ENCODE measurements at regions of chr6 and their contacts with region 1.

Region 1: GRCh38 chr6:44257025-44257752 is at the start of gene SLC35B2:
- DNase-seq: peak; percentile 47
- H3K4me3 Mint-ChIP-seq: peak within 1 kb of the TSS; percentile 84
- H3K27ac Mint-ChIP-seq: peak within 1 kb of the TSS; percentile 57
- H3K4me1 Mint-ChIP-seq: peaks cover 50% of the 10 kb centered on the region
- H3K27me3 Mint-ChIP-seq: no peaks in the 10 kb centered on the region
- CTCF ChIP-seq: peak; percentile 78
- total RNA-seq, gene SLC35B2: 27.1 and 31.3 TPM in 2 replicates

Region 2: DNA sequence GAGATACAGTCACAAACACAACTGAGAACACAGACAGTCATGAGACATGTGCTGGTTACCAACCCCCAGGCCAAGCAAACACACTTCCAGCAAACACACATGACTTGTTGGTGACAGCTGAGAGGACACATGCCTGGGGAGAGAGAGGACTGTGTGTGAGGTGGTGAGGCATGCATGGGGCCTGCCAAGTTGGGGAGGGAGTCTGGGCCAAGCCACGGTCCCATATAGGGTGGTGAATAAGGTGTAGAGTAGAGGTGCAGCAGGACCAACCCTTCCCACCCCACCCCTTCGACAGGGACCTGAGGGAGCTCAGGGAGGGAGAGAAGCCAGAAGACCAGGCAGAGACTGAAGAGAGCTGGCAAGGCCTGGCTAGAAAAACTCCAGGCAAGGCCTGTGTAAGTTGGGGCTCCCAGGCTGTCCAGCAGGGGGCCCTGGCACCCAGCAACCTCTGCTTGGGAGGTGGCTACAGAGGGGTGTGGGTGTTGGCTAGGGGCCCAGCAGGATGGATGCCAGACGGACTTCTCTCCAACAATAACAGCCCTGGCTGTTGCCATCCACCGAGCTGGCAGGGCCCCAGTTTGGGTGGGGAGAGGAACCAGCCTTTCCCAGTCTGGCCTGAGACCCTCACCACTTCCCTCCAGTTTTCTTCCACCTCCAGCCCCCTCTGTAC is 35.8 kb before region 1 on chr6:
- CTCF ChIA-PET with region 1: interaction called, 26 read pairs
- POLR2A ChIA-PET with region 1: interaction called, 6 read pairs
- intact Hi-C with region 1: loop called (anchors 1 kb)
- DNase-seq: peak; percentile 96
- H3K4me3 Mint-ChIP-seq: peak overlapping the region; percentile 47
- H3K27ac Mint-ChIP-seq: peak overlapping the region; percentile 89
- H3K4me1 Mint-ChIP-seq: peaks cover 37% of the 10 kb centered on the region
- H3K27me3 Mint-ChIP-seq: no peaks in the 10 kb centered on the region
- CTCF ChIP-seq: peak; percentile 76

Region 3: GRCh38 chr6:44275749-44276648 is 18.8 kb after region 1 on chr6:
- CTCF ChIA-PET with region 1: no interaction called
- POLR2A ChIA-PET with region 1: no interaction called
- intact Hi-C with region 1: no loop called
- DNase-seq: no peak
- H3K4me3 Mint-ChIP-seq: no peak overlapping the region
- H3K27ac Mint-ChIP-seq: no peak overlapping the region
- H3K4me1 Mint-ChIP-seq: no peaks in the 10 kb centered on the region
- H3K27me3 Mint-ChIP-seq: peaks cover 51% of the 10 kb centered on the region
- CTCF ChIP-seq: no peak

Region 4: DNA sequence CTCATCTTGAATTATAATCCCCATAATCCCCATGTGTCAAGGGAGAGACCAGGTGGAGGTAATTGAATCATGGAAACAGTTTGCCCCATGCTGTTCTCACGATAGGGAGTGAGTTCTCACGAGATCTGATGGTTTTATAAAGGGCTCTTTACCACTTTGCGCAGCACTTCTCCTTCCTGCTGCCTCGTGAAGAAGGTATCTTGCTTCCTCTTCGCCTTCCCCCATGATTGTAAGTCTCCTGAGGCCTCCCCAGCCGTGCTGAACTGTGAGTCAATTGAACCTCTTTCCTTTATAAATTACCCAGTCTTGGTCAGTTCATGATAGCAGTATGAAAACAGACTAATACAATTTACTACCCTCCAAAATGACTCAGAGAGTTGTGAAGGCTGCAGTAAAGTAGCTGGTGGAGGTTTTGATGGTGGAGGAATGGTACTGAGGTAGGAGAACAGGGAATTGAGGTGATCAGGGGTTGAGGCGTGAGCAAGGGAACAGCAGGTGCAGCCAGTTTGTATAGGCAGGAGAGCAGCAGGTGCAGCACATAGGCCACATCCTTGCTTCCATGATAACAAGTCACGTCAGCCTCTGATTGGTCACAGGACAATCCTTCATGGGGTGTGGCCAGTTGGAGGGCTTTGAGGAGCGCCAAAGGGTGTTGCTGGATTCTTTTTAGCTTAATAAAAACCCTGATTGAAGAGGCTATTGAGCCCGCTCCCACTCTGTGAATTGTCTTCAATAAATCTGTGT is 280.3 kb after region 1 on chr6:
- CTCF ChIA-PET with region 1: no interaction called
- POLR2A ChIA-PET with region 1: no interaction called
- intact Hi-C with region 1: no loop called
- DNase-seq: no peak
- H3K4me3 Mint-ChIP-seq: no peak overlapping the region
- H3K27ac Mint-ChIP-seq: no peak overlapping the region
- H3K4me1 Mint-ChIP-seq: no peaks in the 10 kb centered on the region
- H3K27me3 Mint-ChIP-seq: no peaks in the 10 kb centered on the region
- CTCF ChIP-seq: no peak